ENCODE measurements at regions of chr20 and their contacts with region 1.

Region 1: GRCh38 chr20:36613974-36614373 is 8.4 kb downstream of the RAB5IF start:
- DNase-seq: no peak
- ATAC-seq: no peak
- H3K4me3 ChIP-seq: no peak overlapping the region
- H3K27ac ChIP-seq: no peak overlapping the region
- H3K4me1 ChIP-seq: no peaks in the 10 kb centered on the region
- H3K27me3 ChIP-seq: no peaks in the 10 kb centered on the region
- CTCF ChIP-seq: no peak
- EP300 ChIP-seq: no peak
- POLR2A ChIP-seq: no peak
- RAD21 ChIP-seq: no peak

Region 2: GRCh38 chr20:35013421-35014411 is 1600.3 kb before region 1 on chr20:
- CTCF ChIA-PET with region 1: no interaction called
- POLR2A ChIA-PET with region 1: no interaction called
- in situ Hi-C with region 1: no loop called
- intact Hi-C with region 1: no loop called
- DNase-seq: no peak
- ATAC-seq: no peak
- H3K4me3 ChIP-seq: no peak overlapping the region
- H3K27ac ChIP-seq: no peak overlapping the region
- H3K4me1 ChIP-seq: no peaks in the 10 kb centered on the region; a peak in 1 of 5 replicates
- H3K27me3 ChIP-seq: no peaks in the 10 kb centered on the region
- CTCF ChIP-seq: no peak
- EP300 ChIP-seq: no peak
- POLR2A ChIP-seq: no peak
- RAD21 ChIP-seq: no peak

Region 3: GRCh38 chr20:36624068-36624943 is 10.3 kb after region 1 on chr20:
- CTCF ChIA-PET with region 1: no interaction called
- POLR2A ChIA-PET with region 1: interaction called, 12 read pairs
- in situ Hi-C with region 1: no loop called
- intact Hi-C with region 1: no loop called
- DNase-seq: no peak
- ATAC-seq: peak; percentile 71
- H3K4me3 ChIP-seq: no peak overlapping the region
- H3K27ac ChIP-seq: no peak overlapping the region
- H3K4me1 ChIP-seq: peaks cover 0 to 4% of the 10 kb centered on the region in 2 experiments; a peak in 1 of 5 replicates
- H3K27me3 ChIP-seq: no peaks in the 10 kb centered on the region
- CTCF ChIP-seq: no peak
- EP300 ChIP-seq: no peak
- POLR2A ChIP-seq: no peak
- RAD21 ChIP-seq: no peak

Region 4: DNA sequence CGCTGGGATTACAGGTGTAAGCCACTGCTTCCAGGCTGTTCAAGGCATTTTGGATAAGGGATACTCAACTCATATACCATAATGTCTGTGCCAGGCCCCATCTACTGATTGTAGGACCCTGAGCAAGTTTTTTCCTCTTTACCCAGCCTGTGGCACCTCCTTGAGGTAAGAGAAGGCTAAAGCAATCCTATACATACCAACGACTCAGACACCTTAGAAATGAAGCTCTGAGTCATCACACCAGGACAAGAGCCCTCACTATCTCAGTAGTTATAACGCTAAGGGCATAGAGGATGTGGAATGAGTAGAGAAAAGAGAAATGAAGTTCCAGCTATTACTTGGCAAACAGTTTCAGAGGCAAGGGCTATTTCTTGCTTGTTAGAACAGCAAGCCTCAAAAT is 115.0 kb after region 1 on chr20:
- CTCF ChIA-PET with region 1: no interaction called
- POLR2A ChIA-PET with region 1: no interaction called
- in situ Hi-C with region 1: no loop called
- intact Hi-C with region 1: no loop called
- DNase-seq: peak in 1 of 4 experiments; percentile 30
- ATAC-seq: peak; percentile 74
- H3K4me3 ChIP-seq: no peak overlapping the region
- H3K27ac ChIP-seq: no peak overlapping the region
- H3K4me1 ChIP-seq: peaks cover 0 to 3% of the 10 kb centered on the region in 2 experiments; a peak in 2 of 5 replicates
- H3K27me3 ChIP-seq: no peaks in the 10 kb centered on the region
- CTCF ChIP-seq: peak; percentile 14 to 38 (median 30); a peak in 2 of 6 replicates
- EP300 ChIP-seq: no peak
- POLR2A ChIP-seq: no peak
- RAD21 ChIP-seq: peak in 1 of 2 experiments; percentile 34; a peak in 2 of 4 replicates

Region 5: GRCh38 chr20:36745927-36746659 is 132.1 kb after region 1 on chr20 and contains the start of gene NDRG3:
- CTCF ChIA-PET with region 1: no interaction called
- POLR2A ChIA-PET with region 1: interaction called, 3 read pairs
- in situ Hi-C with region 1: no loop called
- intact Hi-C with region 1: loop called (anchors 10 kb)
- DNase-seq: peak; percentile 96 to 97 (median 96)
- ATAC-seq: peak; percentile 97
- H3K4me3 ChIP-seq: peak within 1 kb of the TSS; percentile 61
- H3K27ac ChIP-seq: peak within 1 kb of the TSS; percentile 86
- H3K4me1 ChIP-seq: peaks cover 15 to 23% of the 10 kb centered on the region in 2 experiments
- H3K27me3 ChIP-seq: no peaks in the 10 kb centered on the region
- CTCF ChIP-seq: peak in 1 of 3 experiments; percentile 30; a peak in 1 of 6 replicates
- EP300 ChIP-seq: no peak
- POLR2A ChIP-seq: peak; percentile 71
- RAD21 ChIP-seq: no peak
- polyA plus RNA-seq, gene NDRG3: 15.2 to 23.8 TPM

Region 6: GRCh38 chr20:36830791-36831691 is 217.1 kb after region 1 on chr20:
- CTCF ChIA-PET with region 1: no interaction called
- POLR2A ChIA-PET with region 1: no interaction called
- in situ Hi-C with region 1: no loop called
- intact Hi-C with region 1: no loop called
- DNase-seq: no peak
- ATAC-seq: no peak
- H3K4me3 ChIP-seq: no peak overlapping the region
- H3K27ac ChIP-seq: no peak overlapping the region
- H3K4me1 ChIP-seq: peaks cover 10 to 21% of the 10 kb centered on the region in 2 experiments
- H3K27me3 ChIP-seq: no peaks in the 10 kb centered on the region
- CTCF ChIP-seq: peak; percentile 25 to 36 (median 33); a peak in 4 of 6 replicates
- EP300 ChIP-seq: no peak
- POLR2A ChIP-seq: no peak
- RAD21 ChIP-seq: no peak